ENCODE measurements at regions of chr12 and their contacts with region 1.

Region 1: DNA sequence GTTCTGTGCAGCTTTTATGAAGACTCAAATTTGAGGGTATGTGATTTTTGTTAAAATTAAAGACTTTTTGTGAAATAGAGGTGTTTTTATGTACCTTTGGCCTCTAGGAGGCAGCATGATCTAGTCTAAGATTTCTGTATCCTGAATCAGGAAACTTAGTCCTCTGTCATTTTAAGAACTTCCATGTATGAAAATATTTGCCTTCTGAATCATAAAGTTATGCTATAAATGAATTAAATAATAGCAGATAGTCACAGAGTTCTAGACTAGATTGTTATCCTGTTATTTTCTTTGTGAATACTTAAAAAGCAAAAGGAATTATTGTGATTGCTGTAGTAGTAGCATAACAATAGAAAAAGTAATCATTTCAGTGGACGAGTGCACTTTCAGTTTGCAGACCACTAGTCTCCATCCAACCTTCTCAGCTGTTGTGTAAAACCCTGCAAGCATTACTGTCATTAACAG is 56.3 kb downstream of the FGD4 start:
- DNase-seq: peak; percentile 74
- ATAC-seq: peak; percentile 45
- H3K4me3 ChIP-seq: peak overlapping the region in 3 of 5 experiments; percentile 21 to 42 (median 31)
- H3K4me3 Mint-ChIP-seq: peak overlapping the region; percentile 34
- H3K27ac ChIP-seq: peak overlapping the region in 1 of 2 donors; percentile 38
- H3K27ac Mint-ChIP-seq: no peak overlapping the region
- H3K4me1 ChIP-seq: peaks cover 0 to 4% of the 10 kb centered on the region in 2 donors
- H3K4me1 Mint-ChIP-seq: peaks cover 15% of the 10 kb centered on the region
- H3K27me3 ChIP-seq: no peaks in the 10 kb centered on the region
- H3K27me3 Mint-ChIP-seq: no peaks in the 10 kb centered on the region
- CTCF ChIP-seq: peak; percentile 84

Region 2: DNA sequence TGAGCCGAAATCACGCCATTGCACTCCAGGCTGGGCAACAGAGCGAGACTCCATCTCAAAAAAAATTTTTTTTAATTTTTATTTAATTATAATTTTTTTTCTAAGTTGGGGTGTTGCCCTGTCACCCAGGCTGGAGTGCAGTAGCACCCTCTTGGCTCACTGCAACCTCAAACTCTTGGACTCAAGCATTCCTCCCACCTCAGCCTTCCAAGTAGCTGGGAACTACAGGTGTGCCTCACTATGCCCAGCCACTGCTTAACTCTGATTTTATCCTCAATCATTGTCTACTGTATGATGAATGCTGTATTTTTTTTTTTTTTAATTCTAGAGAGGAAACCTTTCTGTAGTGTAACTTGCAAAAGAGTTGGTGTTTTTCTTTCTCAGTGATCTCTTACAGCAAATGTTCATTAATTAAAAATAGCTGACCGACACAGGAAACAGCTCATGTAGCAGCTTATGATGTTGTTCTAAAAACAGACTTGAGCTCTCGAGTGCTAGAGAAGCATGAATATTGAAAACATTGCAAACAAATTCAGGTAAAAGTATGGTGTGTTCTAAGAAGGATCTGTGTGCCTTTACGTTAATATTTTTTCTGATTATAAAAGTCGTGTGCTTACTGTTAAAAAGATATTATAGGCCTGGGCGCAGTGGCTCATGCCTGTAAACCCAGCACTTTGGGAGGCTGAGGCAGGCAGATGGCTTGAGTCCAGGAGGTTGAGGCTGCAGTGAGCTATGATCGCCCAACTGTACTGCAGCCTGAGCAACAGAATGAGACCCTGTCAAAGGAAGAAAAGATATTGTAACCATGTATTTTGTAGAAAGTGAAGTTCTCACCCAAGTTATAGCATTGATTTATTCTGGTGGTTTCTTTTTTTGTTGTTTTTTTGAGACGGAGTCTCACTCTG is 12.6 kb after region 1 on chr12:
- CTCF ChIA-PET with region 1: interaction called, 12 read pairs
- POLR2A ChIA-PET with region 1: no interaction called
- intact Hi-C with region 1: loop called (anchors 2 kb)
- DNase-seq: peak; percentile 20
- ATAC-seq: no peak
- H3K4me3 ChIP-seq: peak overlapping the region in 3 of 5 experiments; percentile 5 to 52 (median 22)
- H3K4me3 Mint-ChIP-seq: peak overlapping the region; percentile 72
- H3K27ac ChIP-seq: peak overlapping the region; percentile 43 to 81
- H3K27ac Mint-ChIP-seq: peak overlapping the region; percentile 82
- H3K4me1 ChIP-seq: peaks cover 15 to 25% of the 10 kb centered on the region in 2 donors
- H3K4me1 Mint-ChIP-seq: peaks cover 21% of the 10 kb centered on the region
- H3K27me3 ChIP-seq: no peaks in the 10 kb centered on the region
- H3K27me3 Mint-ChIP-seq: no peaks in the 10 kb centered on the region
- CTCF ChIP-seq: no peak

Region 3: GRCh38 chr12:32671930-32672780 is 216.5 kb after region 1 on chr12:
- CTCF ChIA-PET with region 1: interaction called, 33 read pairs
- POLR2A ChIA-PET with region 1: no interaction called
- intact Hi-C with region 1: loop called (anchors 1 kb)
- DNase-seq: peak; percentile 50
- ATAC-seq: no peak
- H3K4me3 ChIP-seq: no peak overlapping the region
- H3K4me3 Mint-ChIP-seq: no peak overlapping the region
- H3K27ac ChIP-seq: no peak overlapping the region
- H3K27ac Mint-ChIP-seq: no peak overlapping the region
- H3K4me1 ChIP-seq: peaks cover 10 to 20% of the 10 kb centered on the region in 2 donors
- H3K4me1 Mint-ChIP-seq: peaks cover 20% of the 10 kb centered on the region
- H3K27me3 ChIP-seq: no peaks in the 10 kb centered on the region
- H3K27me3 Mint-ChIP-seq: no peaks in the 10 kb centered on the region
- CTCF ChIP-seq: peak; percentile 50

Region 4: DNA sequence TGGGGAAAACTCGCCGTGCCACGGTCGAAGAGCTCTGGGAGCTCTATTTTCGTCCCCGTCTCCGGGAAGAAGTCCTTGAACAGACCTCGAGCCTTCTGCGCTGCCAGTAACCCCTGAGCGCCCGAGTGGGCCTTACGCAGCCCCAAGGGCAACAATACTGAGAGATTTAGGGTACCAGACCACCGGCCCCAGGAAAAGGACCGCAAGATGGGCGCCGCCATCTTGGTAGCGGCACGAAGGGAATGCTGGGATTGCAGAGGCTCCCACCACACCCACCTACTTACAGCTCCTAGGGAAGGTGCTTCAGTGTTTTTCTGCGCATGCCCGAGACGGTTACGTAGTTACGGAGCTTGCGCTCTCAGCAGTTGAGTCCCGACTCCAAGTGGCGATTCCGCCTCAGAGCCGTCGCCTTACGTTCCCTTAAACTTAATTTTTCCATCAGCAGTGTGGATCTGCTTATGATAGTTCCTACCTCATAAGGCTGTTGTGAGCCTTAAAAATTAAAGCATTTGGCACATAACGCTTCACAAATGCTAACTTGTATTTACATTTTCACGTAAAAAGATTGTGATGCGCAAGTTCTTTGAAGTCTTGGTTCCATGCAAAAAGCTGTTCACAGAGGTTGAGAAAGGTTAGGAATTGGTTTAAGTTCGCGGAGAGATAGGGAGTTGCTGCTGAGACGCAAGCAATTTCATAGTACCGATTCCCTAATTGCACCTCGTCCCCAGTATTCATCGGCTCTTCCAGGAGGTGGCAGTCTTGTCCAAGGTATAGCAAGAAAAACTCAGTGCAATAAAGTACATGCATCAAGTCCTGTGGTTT is 300.2 kb after region 1 on chr12 and contains the start of gene YARS2:
- CTCF ChIA-PET with region 1: interaction called, 52 read pairs
- POLR2A ChIA-PET with region 1: no interaction called
- intact Hi-C with region 1: loop called (anchors 1 kb)
- DNase-seq: peak; percentile 93
- ATAC-seq: peak; percentile 85
- H3K4me3 ChIP-seq: peak within 1 kb of the TSS; percentile 78 to 97 (median 91)
- H3K4me3 Mint-ChIP-seq: peak within 1 kb of the TSS; percentile 93
- H3K27ac ChIP-seq: peak within 1 kb of the TSS; percentile 64 to 65
- H3K27ac Mint-ChIP-seq: peak within 1 kb of the TSS; percentile 89
- H3K4me1 ChIP-seq: peaks cover 12 to 15% of the 10 kb centered on the region in 2 donors
- H3K4me1 Mint-ChIP-seq: peaks cover 19% of the 10 kb centered on the region
- H3K27me3 ChIP-seq: no peaks in the 10 kb centered on the region
- H3K27me3 Mint-ChIP-seq: no peaks in the 10 kb centered on the region
- CTCF ChIP-seq: peak; percentile 92
- total RNA-seq, gene YARS2: 18.8 and 24.3 TPM in 2 replicates

Region 5: GRCh38 chr12:34022079-34022830 is 1566.6 kb after region 1 on chr12 and contains the start of gene ALG10:
- CTCF ChIA-PET with region 1: interaction called, 8 read pairs
- POLR2A ChIA-PET with region 1: no interaction called
- intact Hi-C with region 1: loop called (anchors 1 kb)
- DNase-seq: peak; percentile 97
- ATAC-seq: peak; percentile 96
- H3K4me3 ChIP-seq: peak within 1 kb of the TSS; percentile 47 to 90 (median 79)
- H3K4me3 Mint-ChIP-seq: peak within 1 kb of the TSS; percentile 96
- H3K27ac ChIP-seq: peak within 1 kb of the TSS; percentile 89 to 90
- H3K27ac Mint-ChIP-seq: peak within 1 kb of the TSS; percentile 96
- H3K4me1 ChIP-seq: peaks cover 6 to 8% of the 10 kb centered on the region in 2 donors
- H3K4me1 Mint-ChIP-seq: peaks cover 19% of the 10 kb centered on the region
- H3K27me3 ChIP-seq: no peaks in the 10 kb centered on the region
- H3K27me3 Mint-ChIP-seq: peaks cover 2% of the 10 kb centered on the region
- CTCF ChIP-seq: peak; percentile 78
- total RNA-seq, gene ALG10: 15.8 and 17.0 TPM in 2 replicates

Region 6: DNA sequence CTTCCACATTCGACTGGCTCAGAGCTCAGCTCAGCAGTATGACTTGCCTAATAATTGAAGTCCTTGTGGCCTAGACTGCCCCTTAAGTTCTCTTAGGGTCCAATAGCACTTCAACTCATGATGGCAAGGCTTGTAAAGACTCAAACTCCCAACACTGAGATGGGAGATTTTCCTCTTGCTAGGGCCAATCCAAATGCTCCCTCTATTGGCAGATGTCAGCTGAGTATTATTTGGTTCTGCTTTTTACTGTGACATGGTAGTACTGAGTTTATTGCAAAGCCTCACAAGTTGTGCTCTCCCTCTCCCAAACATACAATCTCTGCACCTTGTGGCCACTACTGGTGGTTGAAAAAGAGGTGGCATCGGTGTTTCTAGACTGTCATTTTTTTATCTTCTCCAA is 1730.9 kb after region 1 on chr12:
- CTCF ChIA-PET with region 1: no interaction called
- POLR2A ChIA-PET with region 1: no interaction called
- intact Hi-C with region 1: no loop called
- DNase-seq: no peak
- ATAC-seq: no peak
- H3K4me3 ChIP-seq: no peak overlapping the region
- H3K4me3 Mint-ChIP-seq: no peak overlapping the region
- H3K27ac ChIP-seq: no peak overlapping the region
- H3K27ac Mint-ChIP-seq: no peak overlapping the region
- H3K4me1 ChIP-seq: peaks cover 18 to 27% of the 10 kb centered on the region in 2 donors
- H3K4me1 Mint-ChIP-seq: peaks cover 28% of the 10 kb centered on the region
- H3K27me3 ChIP-seq: no peaks in the 10 kb centered on the region
- H3K27me3 Mint-ChIP-seq: no peaks in the 10 kb centered on the region
- CTCF ChIP-seq: no peak

Measured in B cell (primary cell).